ENCODE measurements at regions of chr1 and their contacts with region 1.

Region 1: DNA sequence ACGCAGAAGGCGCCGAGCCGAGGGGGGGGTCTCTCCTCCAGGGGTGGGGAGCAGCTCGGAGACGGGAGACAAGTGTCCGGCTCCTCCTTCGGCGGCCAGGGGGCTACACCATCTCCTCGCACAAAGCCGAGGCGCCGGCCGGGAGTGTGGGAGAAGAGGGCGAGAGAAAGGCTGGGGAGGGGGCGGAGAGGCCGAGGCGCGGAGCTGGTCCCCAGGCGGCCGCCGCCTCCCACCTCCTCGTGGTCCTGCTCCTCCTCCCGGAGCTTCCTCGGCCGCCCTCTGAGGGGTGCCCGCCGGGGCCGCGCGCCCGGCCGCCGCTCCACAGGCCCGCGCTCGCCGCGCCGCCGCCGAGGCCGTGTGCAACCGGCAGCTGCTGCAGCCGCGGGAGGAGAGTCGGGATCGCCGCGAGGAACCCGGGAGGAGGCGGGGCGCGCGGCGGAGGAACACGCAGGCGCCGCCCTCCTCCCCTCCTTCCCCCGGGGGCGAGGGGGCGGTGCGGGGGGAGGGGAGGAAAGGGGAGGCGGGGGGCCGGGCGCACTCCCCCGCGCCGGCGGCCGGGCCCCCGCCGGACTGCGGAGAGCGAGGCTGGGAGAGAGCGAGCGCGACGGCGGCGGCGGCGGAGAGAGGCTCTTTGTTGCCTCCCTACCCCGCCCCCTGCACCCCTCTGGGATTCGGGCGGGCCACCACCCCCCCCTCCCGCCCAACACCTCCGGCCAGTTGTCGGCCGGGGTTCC is at the start of gene ENAH:
- DNase-seq: peak; percentile 86 to 94 (median 94)
- ATAC-seq: peak; percentile 85 to 90
- H3K4me3 ChIP-seq: peak within 1 kb of the TSS; percentile 97
- H3K27ac ChIP-seq: peak within 1 kb of the TSS; percentile 98
- H3K4me1 ChIP-seq: no peaks in the 10 kb centered on the region
- H3K27me3 ChIP-seq: no peaks in the 10 kb centered on the region
- total RNA-seq, gene ENAH: 99.0 to 132 (median 115) TPM

Region 2: DNA sequence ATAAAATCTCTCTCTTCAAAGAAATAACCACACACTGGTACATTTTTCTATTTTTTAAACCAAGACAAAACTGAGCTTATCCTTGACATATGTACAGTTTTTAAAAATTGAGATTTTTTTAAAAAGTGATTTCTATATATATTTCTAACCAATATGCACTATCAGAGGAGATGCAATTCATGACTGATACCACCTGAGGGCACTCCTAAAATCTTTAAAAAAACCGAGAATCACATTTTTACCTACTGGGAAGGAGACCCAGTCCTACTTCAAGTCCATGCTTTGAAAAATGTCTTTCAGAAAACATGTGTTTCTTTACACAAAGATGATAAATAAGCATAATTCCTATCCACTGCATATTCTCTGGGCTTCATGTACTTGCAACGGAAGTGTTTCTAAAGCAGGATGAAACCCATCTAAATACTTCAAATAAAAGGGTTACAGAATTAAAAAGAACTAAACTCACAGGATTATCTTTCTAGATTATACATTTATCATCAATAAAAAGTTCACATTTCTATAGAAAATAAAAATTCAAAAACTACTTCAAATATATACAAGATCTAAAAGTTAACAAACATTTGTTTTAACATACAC is 98.6 kb before region 1 on chr1:
- intact Hi-C with region 1: loop called in 1 of 4 experiments (anchors 10 kb)
- DNase-seq: no peak
- ATAC-seq: no peak
- H3K4me3 ChIP-seq: no peak overlapping the region
- H3K27ac ChIP-seq: no peak overlapping the region
- H3K4me1 ChIP-seq: no peaks in the 10 kb centered on the region
- H3K27me3 ChIP-seq: no peaks in the 10 kb centered on the region

Region 3: DNA sequence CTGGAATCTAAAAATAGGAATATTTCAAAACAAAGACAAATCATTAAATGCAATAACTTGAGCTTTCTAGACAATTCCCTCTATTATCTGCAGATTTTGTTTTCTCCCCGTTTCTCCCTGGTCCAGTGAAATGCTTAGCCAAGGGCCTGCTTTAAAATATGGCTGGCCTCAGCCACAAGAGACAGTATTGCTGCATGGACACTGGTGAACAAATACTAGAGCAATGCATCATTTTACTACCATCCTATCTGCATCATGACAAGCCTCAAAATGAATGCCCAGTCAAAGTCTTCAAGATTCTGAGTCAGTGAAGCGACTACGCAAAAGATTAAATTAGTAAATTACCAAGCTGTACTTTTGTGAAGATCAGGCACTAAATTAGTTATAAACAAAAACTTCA is 80.5 kb before region 1 on chr1:
- intact Hi-C with region 1: loop called in 1 of 4 experiments (anchors 10 kb)
- DNase-seq: no peak
- ATAC-seq: peak in 1 of 2 donors; percentile 51
- H3K4me3 ChIP-seq: no peak overlapping the region
- H3K27ac ChIP-seq: no peak overlapping the region
- H3K4me1 ChIP-seq: peaks cover 3% of the 10 kb centered on the region
- H3K27me3 ChIP-seq: no peaks in the 10 kb centered on the region

Region 4: GRCh38 chr1:225754940-225755641 is 102.2 kb after region 1 on chr1:
- intact Hi-C with region 1: loop called in 2 of 4 experiments (anchors 5 to 10 kb)
- DNase-seq: peak; percentile 79 to 91 (median 86)
- ATAC-seq: peak; percentile 91 to 92
- H3K4me3 ChIP-seq: no peak overlapping the region
- H3K27ac ChIP-seq: peak overlapping the region; percentile 64
- H3K4me1 ChIP-seq: peaks cover 13% of the 10 kb centered on the region
- H3K27me3 ChIP-seq: no peaks in the 10 kb centered on the region

Region 5: GRCh38 chr1:225766967-225767633 is 114.2 kb after region 1 on chr1:
- intact Hi-C with region 1: loop called in 3 of 4 experiments (anchors 5 to 10 kb)
- DNase-seq: peak; percentile 74 to 81 (median 77)
- ATAC-seq: peak; percentile 47 to 77
- H3K4me3 ChIP-seq: no peak overlapping the region
- H3K27ac ChIP-seq: peak overlapping the region; percentile 93
- H3K4me1 ChIP-seq: peaks cover 22% of the 10 kb centered on the region
- H3K27me3 ChIP-seq: no peaks in the 10 kb centered on the region

Region 6: DNA sequence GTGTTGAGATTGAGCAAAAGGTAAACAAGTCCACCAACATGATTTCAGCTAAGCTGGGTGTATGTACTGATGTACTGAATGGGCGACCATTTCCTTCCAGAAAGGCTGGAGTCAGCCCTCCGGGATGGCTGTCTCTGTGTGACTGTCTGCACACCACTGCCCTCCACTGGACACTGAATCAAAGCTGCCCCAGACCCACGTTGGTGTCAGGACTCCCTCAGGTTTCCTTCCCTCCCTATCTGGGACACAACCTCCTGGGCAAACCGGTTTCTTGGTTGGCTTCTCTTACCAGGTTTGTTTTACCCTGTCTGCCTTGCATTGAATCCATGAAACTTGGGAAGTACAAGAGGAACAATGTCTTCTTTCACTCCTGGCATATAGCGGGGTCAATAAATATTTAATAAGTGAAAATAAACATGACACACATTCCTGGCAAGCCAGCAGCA is 119.5 kb after region 1 on chr1:
- intact Hi-C with region 1: loop called in 3 of 4 experiments (anchors 5 to 10 kb)
- DNase-seq: peak; percentile 82 to 92 (median 90)
- ATAC-seq: peak; percentile 82 to 86
- H3K4me3 ChIP-seq: no peak overlapping the region
- H3K27ac ChIP-seq: no peak overlapping the region
- H3K4me1 ChIP-seq: peaks cover 8% of the 10 kb centered on the region
- H3K27me3 ChIP-seq: no peaks in the 10 kb centered on the region